ENCODE measurements at regions of chr19 and their contacts with region 1.

Region 1: DNA sequence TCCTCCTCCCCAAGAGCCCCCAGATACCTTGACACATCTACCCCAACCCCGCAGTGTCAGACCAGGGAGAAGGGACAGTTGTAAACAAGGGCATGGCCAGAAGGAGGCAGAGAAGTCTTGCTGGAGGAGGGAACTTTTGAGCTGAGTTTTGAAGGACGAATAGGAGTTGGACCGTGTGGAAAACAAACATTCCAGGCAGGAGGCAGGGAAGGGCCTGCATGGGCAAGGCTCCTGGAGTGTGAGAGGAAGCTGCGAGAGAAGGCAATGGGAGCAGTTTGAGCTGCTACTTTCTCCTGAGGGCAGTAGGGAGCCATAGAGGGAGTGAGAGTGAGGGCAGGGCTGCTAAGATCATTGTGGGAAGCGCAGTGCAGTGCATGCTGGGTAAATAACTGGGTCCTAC is 23.3 kb downstream of the IL12RB1 start:
- DNase-seq: peak; percentile 69
- H3K4me3 Mint-ChIP-seq: no peak overlapping the region
- H3K27ac Mint-ChIP-seq: no peak overlapping the region
- H3K4me1 Mint-ChIP-seq: peaks cover 1% of the 10 kb centered on the region
- H3K27me3 Mint-ChIP-seq: no peaks in the 10 kb centered on the region

Region 2: GRCh38 chr19:18167975-18168645 is 104.6 kb after region 1 on chr19:
- CTCF ChIA-PET with region 1: interaction called, 3 read pairs
- intact Hi-C with region 1: loop called (anchors 1 kb)
- DNase-seq: peak; percentile 76
- H3K4me3 Mint-ChIP-seq: no peak overlapping the region
- H3K27ac Mint-ChIP-seq: no peak overlapping the region
- H3K4me1 Mint-ChIP-seq: no peaks in the 10 kb centered on the region
- H3K27me3 Mint-ChIP-seq: no peaks in the 10 kb centered on the region

Region 3: GRCh38 chr19:18251587-18252369 is 188.3 kb after region 1 on chr19:
- CTCF ChIA-PET with region 1: interaction called, 4 read pairs
- intact Hi-C with region 1: loop called (anchors 2 kb)
- DNase-seq: peak; percentile 90
- H3K4me3 Mint-ChIP-seq: no peak overlapping the region
- H3K27ac Mint-ChIP-seq: no peak overlapping the region
- H3K4me1 Mint-ChIP-seq: peaks cover 2% of the 10 kb centered on the region
- H3K27me3 Mint-ChIP-seq: peaks cover 23% of the 10 kb centered on the region

Measured in activated naive CD4-positive, alpha-beta T cell treated with anti-CD3 and anti-CD28 coated beads for 36 hours (primary cell).